GM12878 (cell line): ENCODE measurements at regions of chr11 and their contacts with region 1.

Region 1: GRCh38 chr11:108697872-108698473 is 33.1 kb downstream of the DDX10 start:
- DNase-seq: peak; percentile 49
- ATAC-seq: peak; percentile 92
- H3K4me3 ChIP-seq: no peak overlapping the region
- H3K27ac ChIP-seq: no peak overlapping the region
- H3K4me1 ChIP-seq: 0 out of 2 replicates have a peak, but pooled peaks cover 3% of the 10 kb centered on the region
- H3K27me3 ChIP-seq: no peaks in the 10 kb centered on the region
- CTCF ChIP-seq: peak; percentile 89 to 98 (median 94)
- EP300 ChIP-seq: no peak
- POLR2A ChIP-seq: no peak
- RAD21 ChIP-seq: peak; percentile 100

Region 2: GRCh38 chr11:108713076-108713790 is 15.3 kb after region 1 on chr11:
- CTCF ChIA-PET with region 1: interaction called, 18 read pairs
- POLR2A ChIA-PET with region 1: interaction called, 7 read pairs
- RAD21 ChIA-PET with region 1: interaction called, 6 read pairs
- SMC1A ChIA-PET with region 1: interaction called, 10 read pairs
- in situ Hi-C with region 1: no loop called
- intact Hi-C with region 1: no loop called
- DNase-seq: peak; percentile 54
- ATAC-seq: peak; percentile 80
- H3K4me3 ChIP-seq: peak overlapping the region; percentile 19; the same call in 1 of the 2 replicates
- H3K27ac ChIP-seq: peak overlapping the region; percentile 62
- H3K4me1 ChIP-seq: peaks cover 8% of the 10 kb centered on the region; the same call in 1 of the 2 replicates
- H3K27me3 ChIP-seq: no peaks in the 10 kb centered on the region
- CTCF ChIP-seq: no peak
- EP300 ChIP-seq: no peak; a peak in 1 of 4 replicates
- POLR2A ChIP-seq: no peak
- RAD21 ChIP-seq: 0 out of 2 replicates have a peak, but pooled peaks have one; percentile 2

Region 3: GRCh38 chr11:108754901-108755632 is 57.1 kb after region 1 on chr11:
- CTCF ChIA-PET with region 1: interaction called, 4 read pairs
- POLR2A ChIA-PET with region 1: interaction called, 5 read pairs
- RAD21 ChIA-PET with region 1: interaction called, 10 read pairs
- SMC1A ChIA-PET with region 1: interaction called, 6 read pairs
- in situ Hi-C with region 1: no loop called
- intact Hi-C with region 1: no loop called
- DNase-seq: no peak
- ATAC-seq: peak; percentile 19
- H3K4me3 ChIP-seq: no peak overlapping the region
- H3K27ac ChIP-seq: peak overlapping the region; percentile 18; the same call in 1 of the 2 replicates
- H3K4me1 ChIP-seq: peaks cover 6% of the 10 kb centered on the region
- H3K27me3 ChIP-seq: no peaks in the 10 kb centered on the region
- CTCF ChIP-seq: no peak
- EP300 ChIP-seq: no peak
- POLR2A ChIP-seq: no peak
- RAD21 ChIP-seq: no peak

Region 4: DNA sequence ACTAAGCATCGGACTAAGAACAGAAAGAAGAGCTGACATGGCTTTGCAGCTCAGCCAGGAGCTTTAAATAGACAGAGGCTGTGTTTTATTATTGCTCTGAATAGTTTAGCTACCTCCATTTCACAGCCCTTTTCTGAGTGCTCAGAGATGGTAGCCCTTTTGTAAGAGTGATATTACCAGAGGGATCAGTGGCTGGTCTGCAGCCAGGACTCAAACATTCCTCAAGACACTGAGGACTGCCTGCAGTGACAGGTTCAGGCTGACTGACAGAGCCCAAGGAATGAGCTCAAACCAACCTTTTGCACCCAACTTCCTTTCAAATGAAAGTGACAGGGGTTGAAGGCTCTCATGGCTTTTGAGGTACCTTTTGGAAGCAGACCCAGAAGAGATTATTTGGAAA is 155.9 kb after region 1 on chr11:
- CTCF ChIA-PET with region 1: interaction called, 25 read pairs
- POLR2A ChIA-PET with region 1: no interaction called
- RAD21 ChIA-PET with region 1: interaction called, 23 read pairs
- SMC1A ChIA-PET with region 1: interaction called, 22 read pairs
- in situ Hi-C with region 1: no loop called
- intact Hi-C with region 1: no loop called
- DNase-seq: no peak
- ATAC-seq: peak; percentile 72
- H3K4me3 ChIP-seq: peak overlapping the region; percentile 61
- H3K27ac ChIP-seq: peak overlapping the region; percentile 80
- H3K4me1 ChIP-seq: peaks cover 13% of the 10 kb centered on the region
- H3K27me3 ChIP-seq: no peaks in the 10 kb centered on the region
- CTCF ChIP-seq: no peak
- EP300 ChIP-seq: no peak
- POLR2A ChIP-seq: peak; percentile 43; the same call in 1 of the 2 replicates
- RAD21 ChIP-seq: no peak

Region 5: GRCh38 chr11:108947654-108948570 is 249.9 kb after region 1 on chr11:
- CTCF ChIA-PET with region 1: no interaction called
- POLR2A ChIA-PET with region 1: no interaction called
- RAD21 ChIA-PET with region 1: no interaction called
- SMC1A ChIA-PET with region 1: no interaction called
- in situ Hi-C with region 1: no loop called
- intact Hi-C with region 1: loop called (anchors 10 kb)
- DNase-seq: no peak
- ATAC-seq: no peak
- H3K4me3 ChIP-seq: no peak overlapping the region
- H3K27ac ChIP-seq: no peak overlapping the region
- H3K4me1 ChIP-seq: no peaks in the 10 kb centered on the region; the same call in 1 of the 2 replicates
- H3K27me3 ChIP-seq: no peaks in the 10 kb centered on the region
- CTCF ChIP-seq: no peak
- EP300 ChIP-seq: no peak
- POLR2A ChIP-seq: no peak
- RAD21 ChIP-seq: no peak

Region 6: GRCh38 chr11:109697140-109697843 is 999.3 kb after region 1 on chr11:
- CTCF ChIA-PET with region 1: interaction called, 30 read pairs
- POLR2A ChIA-PET with region 1: no interaction called
- RAD21 ChIA-PET with region 1: interaction called, 13 read pairs
- SMC1A ChIA-PET with region 1: interaction called, 18 read pairs
- in situ Hi-C with region 1: loop called (anchors 5 kb)
- intact Hi-C with region 1: loop called (anchors 1 kb)
- DNase-seq: no peak
- ATAC-seq: peak; percentile 96
- H3K4me3 ChIP-seq: no peak overlapping the region
- H3K27ac ChIP-seq: no peak overlapping the region
- H3K4me1 ChIP-seq: no peaks in the 10 kb centered on the region
- H3K27me3 ChIP-seq: no peaks in the 10 kb centered on the region
- CTCF ChIP-seq: peak; percentile 70 to 76 (median 75)
- EP300 ChIP-seq: no peak
- POLR2A ChIP-seq: no peak
- RAD21 ChIP-seq: peak; percentile 83